Activated CD4-positive, alpha-beta memory T cell treated with anti-CD3 and anti-CD28 coated beads for 36 hours (primary cell): ENCODE measurements at regions of chr14 and their contacts with region 1.

Region 1: GRCh38 chr14:54773171-54773975 is 129.3 kb downstream of the GCH1 start:
- DNase-seq: peak; percentile 91
- H3K4me3 Mint-ChIP-seq: peak overlapping the region; percentile 44
- H3K27ac Mint-ChIP-seq: peak overlapping the region; percentile 80
- H3K4me1 Mint-ChIP-seq: peaks cover 42% of the 10 kb centered on the region
- H3K27me3 Mint-ChIP-seq: peaks cover 4% of the 10 kb centered on the region

Region 2: GRCh38 chr14:54555651-54556050 is 217.7 kb before region 1 on chr14:
- CTCF ChIA-PET with region 1: interaction called, 15 read pairs
- POLR2A ChIA-PET with region 1: no interaction called
- intact Hi-C with region 1: no loop called
- DNase-seq: no peak
- H3K4me3 Mint-ChIP-seq: no peak overlapping the region
- H3K27ac Mint-ChIP-seq: no peak overlapping the region
- H3K4me1 Mint-ChIP-seq: no peaks in the 10 kb centered on the region
- H3K27me3 Mint-ChIP-seq: no peaks in the 10 kb centered on the region

Region 3: GRCh38 chr14:54627540-54628363 is 145.6 kb before region 1 on chr14:
- CTCF ChIA-PET with region 1: interaction called, 19 read pairs
- POLR2A ChIA-PET with region 1: interaction called, 4 read pairs
- intact Hi-C with region 1: loop called (anchors 1 kb)
- DNase-seq: peak; percentile 49
- H3K4me3 Mint-ChIP-seq: peak overlapping the region; percentile 55
- H3K27ac Mint-ChIP-seq: peak overlapping the region; percentile 78
- H3K4me1 Mint-ChIP-seq: peaks cover 40% of the 10 kb centered on the region
- H3K27me3 Mint-ChIP-seq: no peaks in the 10 kb centered on the region

Region 4: GRCh38 chr14:54709444-54709843 is 63.9 kb before region 1 on chr14:
- CTCF ChIA-PET with region 1: interaction called, 10 read pairs
- POLR2A ChIA-PET with region 1: no interaction called
- intact Hi-C with region 1: no loop called
- DNase-seq: no peak
- H3K4me3 Mint-ChIP-seq: no peak overlapping the region
- H3K27ac Mint-ChIP-seq: no peak overlapping the region
- H3K4me1 Mint-ChIP-seq: peaks cover 17% of the 10 kb centered on the region
- H3K27me3 Mint-ChIP-seq: no peaks in the 10 kb centered on the region

Region 5: GRCh38 chr14:54742492-54743350 is 30.7 kb before region 1 on chr14:
- CTCF ChIA-PET with region 1: interaction called, 13 read pairs
- POLR2A ChIA-PET with region 1: no interaction called
- intact Hi-C with region 1: loop called (anchors 1 kb)
- DNase-seq: no peak
- H3K4me3 Mint-ChIP-seq: no peak overlapping the region
- H3K27ac Mint-ChIP-seq: no peak overlapping the region
- H3K4me1 Mint-ChIP-seq: peaks cover 28% of the 10 kb centered on the region
- H3K27me3 Mint-ChIP-seq: peaks cover 4% of the 10 kb centered on the region

Region 6: DNA sequence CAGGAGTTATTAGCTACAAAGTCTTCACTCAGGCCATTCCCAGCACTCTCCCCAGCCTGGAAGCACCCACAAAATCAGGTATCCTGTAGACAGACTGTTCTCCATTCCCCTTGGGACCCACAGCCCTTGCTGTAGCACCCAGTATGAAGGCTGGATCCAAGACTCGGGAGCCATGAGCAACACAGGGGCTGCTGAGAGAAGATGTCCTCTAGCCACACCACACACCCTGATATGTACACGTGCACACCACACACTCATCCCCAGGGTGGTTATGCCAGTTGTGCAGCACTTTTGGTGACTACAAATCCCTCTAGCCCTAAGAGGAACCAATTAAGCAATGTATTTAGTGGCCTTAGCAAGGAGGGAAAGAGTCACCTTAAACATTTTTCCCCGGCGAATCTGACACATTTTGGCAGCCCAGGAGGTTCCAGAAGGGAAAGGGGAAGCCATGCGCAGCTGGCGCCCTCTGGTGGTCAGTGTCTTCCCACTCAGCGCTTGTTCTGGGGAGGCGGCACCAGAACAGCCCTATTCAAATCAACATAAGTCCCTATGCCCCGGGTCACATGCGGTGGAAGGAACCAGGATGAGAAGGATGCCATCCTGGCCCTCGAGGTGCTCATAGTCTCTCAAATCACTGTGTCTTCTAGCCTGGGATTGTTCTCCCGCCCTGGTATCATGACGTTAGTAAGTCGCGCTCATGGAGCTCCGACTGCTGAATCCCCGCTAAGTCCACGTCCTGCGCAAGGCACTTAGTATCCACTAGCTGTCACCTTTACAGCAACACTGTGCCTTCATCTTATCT is 32.3 kb after region 1 on chr14:
- CTCF ChIA-PET with region 1: interaction called, 27 read pairs
- POLR2A ChIA-PET with region 1: no interaction called
- intact Hi-C with region 1: loop called (anchors 1 kb)
- DNase-seq: peak; percentile 86
- H3K4me3 Mint-ChIP-seq: no peak overlapping the region
- H3K27ac Mint-ChIP-seq: no peak overlapping the region
- H3K4me1 Mint-ChIP-seq: peaks cover 13% of the 10 kb centered on the region
- H3K27me3 Mint-ChIP-seq: peaks cover 21% of the 10 kb centered on the region

Region 7: DNA sequence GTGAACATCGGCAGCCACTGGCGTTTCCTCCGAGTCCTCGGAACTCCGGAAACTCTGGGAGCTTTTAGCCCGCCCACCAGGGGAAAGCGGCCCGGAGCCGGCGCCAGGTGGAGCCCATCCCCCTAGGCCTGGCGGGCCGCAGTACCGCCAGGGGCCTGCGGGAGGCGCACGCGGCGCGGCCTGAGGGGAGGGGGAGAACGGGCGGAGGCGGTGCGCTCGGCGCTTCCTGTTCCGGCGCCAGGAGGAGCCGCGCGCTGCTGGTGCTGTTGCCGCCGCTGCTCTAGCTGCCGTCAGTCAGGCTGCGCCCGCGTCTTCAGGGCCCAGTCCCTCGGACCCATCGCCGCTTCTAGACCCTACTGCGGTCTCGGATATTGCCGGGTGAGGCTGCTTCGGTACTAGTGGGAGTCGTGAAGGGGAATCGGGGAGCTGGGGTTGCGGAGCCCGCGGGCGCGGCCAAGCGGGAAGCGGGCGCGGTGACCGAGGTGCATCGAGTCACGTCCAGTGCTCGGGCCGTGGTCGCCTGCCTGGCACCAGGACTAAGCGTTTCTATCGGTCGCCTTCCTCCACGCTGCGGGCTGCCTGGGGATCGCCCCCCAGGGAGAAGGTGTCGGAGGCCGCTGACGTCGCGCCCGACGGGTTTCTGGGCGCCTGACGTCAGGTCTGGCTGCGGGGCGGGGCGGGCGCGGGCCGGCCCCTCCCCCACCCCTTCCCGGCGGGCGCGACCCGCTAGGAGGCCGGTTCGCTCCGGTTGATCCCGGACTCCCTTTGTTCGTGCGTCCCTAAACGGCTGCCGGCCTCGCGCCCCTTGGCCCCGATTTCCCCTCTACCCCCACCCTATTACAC is 278.3 kb after region 1 on chr14 and contains the start of gene MAPK1IP1L:
- CTCF ChIA-PET with region 1: no interaction called
- POLR2A ChIA-PET with region 1: no interaction called
- intact Hi-C with region 1: no loop called
- DNase-seq: peak; percentile 94
- H3K4me3 Mint-ChIP-seq: peak within 1 kb of the TSS; percentile 82
- H3K27ac Mint-ChIP-seq: peak within 1 kb of the TSS; percentile 94
- H3K4me1 Mint-ChIP-seq: peaks cover 36% of the 10 kb centered on the region
- H3K27me3 Mint-ChIP-seq: no peaks in the 10 kb centered on the region
- total RNA-seq, gene MAPK1IP1L: 85.5 to 89.1 TPM